IMR-90 (cell line): ENCODE measurements at regions of chr10 and their contacts with region 1.

Region 1: GRCh38 chr10:103712570-103713498 is 142.5 kb downstream of the SH3PXD2A start:
- DNase-seq: peak; percentile 75
- ATAC-seq: peak; percentile 77
- H3K4me3 ChIP-seq: no peak overlapping the region
- H3K27ac ChIP-seq: no peak overlapping the region
- H3K4me1 ChIP-seq: peaks cover 17% of the 10 kb centered on the region
- H3K27me3 ChIP-seq: no peaks in the 10 kb centered on the region
- CTCF ChIP-seq: peak; percentile 96
- POLR2A ChIP-seq: 0 out of 2 replicates have a peak, but pooled peaks have one; percentile 26
- RAD21 ChIP-seq: peak; percentile 97

Region 2: GRCh38 chr10:103281753-103282152 is 431.1 kb before region 1 on chr10:
- CTCF ChIA-PET with region 1: no interaction called
- POLR2A ChIA-PET with region 1: no interaction called
- dilution Hi-C with region 1: no loop called
- in situ Hi-C with region 1: no loop called
- intact Hi-C with region 1: no loop called
- DNase-seq: peak; percentile 43
- ATAC-seq: peak; percentile 61
- H3K4me3 ChIP-seq: no peak overlapping the region
- H3K27ac ChIP-seq: no peak overlapping the region
- H3K4me1 ChIP-seq: peaks cover 9% of the 10 kb centered on the region; the same call in 1 of the 2 replicates
- H3K27me3 ChIP-seq: peaks cover 16% of the 10 kb centered on the region
- CTCF ChIP-seq: no peak
- POLR2A ChIP-seq: no peak
- RAD21 ChIP-seq: no peak

Region 3: GRCh38 chr10:103542764-103543616 is 169.8 kb before region 1 on chr10:
- CTCF ChIA-PET with region 1: no interaction called
- POLR2A ChIA-PET with region 1: no interaction called
- dilution Hi-C with region 1: no loop called
- in situ Hi-C with region 1: no loop called
- intact Hi-C with region 1: no loop called
- DNase-seq: peak; percentile 49
- ATAC-seq: peak; percentile 77
- H3K4me3 ChIP-seq: peak overlapping the region; percentile 39
- H3K27ac ChIP-seq: no peak overlapping the region
- H3K4me1 ChIP-seq: peaks cover 3% of the 10 kb centered on the region; the same call in 1 of the 2 replicates
- H3K27me3 ChIP-seq: peaks cover 82% of the 10 kb centered on the region
- CTCF ChIP-seq: peak; percentile 49
- POLR2A ChIP-seq: no peak
- RAD21 ChIP-seq: peak; percentile 29

Region 4: GRCh38 chr10:103772096-103772845 is 59.4 kb after region 1 on chr10:
- CTCF ChIA-PET with region 1: no interaction called
- POLR2A ChIA-PET with region 1: no interaction called
- dilution Hi-C with region 1: no loop called
- in situ Hi-C with region 1: no loop called
- intact Hi-C with region 1: loop called (anchors 5 kb)
- DNase-seq: peak; percentile 98
- ATAC-seq: peak; percentile 98
- H3K4me3 ChIP-seq: 0 out of 2 replicates have a peak overlapping the region, but pooled peaks have one; percentile 4
- H3K27ac ChIP-seq: peak overlapping the region; percentile 26
- H3K4me1 ChIP-seq: peaks cover 8% of the 10 kb centered on the region; the same call in 1 of the 2 replicates
- H3K27me3 ChIP-seq: no peaks in the 10 kb centered on the region
- CTCF ChIP-seq: no peak
- POLR2A ChIP-seq: peak; percentile 20; the same call in 1 of the 2 replicates
- RAD21 ChIP-seq: peak; percentile 4; the same call in 1 of the 2 replicates

Region 5: GRCh38 chr10:103859161-103860086 is 146.6 kb after region 1 on chr10:
- CTCF ChIA-PET with region 1: interaction called, 4 read pairs
- POLR2A ChIA-PET with region 1: no interaction called
- dilution Hi-C with region 1: loop called (anchors 25 kb)
- in situ Hi-C with region 1: loop called (anchors 5 kb)
- intact Hi-C with region 1: loop called (anchors 1 kb)
- DNase-seq: peak; percentile 74
- ATAC-seq: peak; percentile 76
- H3K4me3 ChIP-seq: no peak overlapping the region
- H3K27ac ChIP-seq: no peak overlapping the region
- H3K4me1 ChIP-seq: peaks cover 6% of the 10 kb centered on the region; the same call in 1 of the 2 replicates
- H3K27me3 ChIP-seq: no peaks in the 10 kb centered on the region
- CTCF ChIP-seq: peak; percentile 75
- POLR2A ChIP-seq: no peak
- RAD21 ChIP-seq: peak; percentile 77

Region 6: GRCh38 chr10:104002911-104003310 is 290.1 kb after region 1 on chr10:
- CTCF ChIA-PET with region 1: no interaction called
- POLR2A ChIA-PET with region 1: no interaction called
- dilution Hi-C with region 1: no loop called
- in situ Hi-C with region 1: loop called (anchors 25 kb)
- intact Hi-C with region 1: no loop called
- DNase-seq: no peak
- ATAC-seq: no peak
- H3K4me3 ChIP-seq: no peak overlapping the region
- H3K27ac ChIP-seq: no peak overlapping the region
- H3K4me1 ChIP-seq: no peaks in the 10 kb centered on the region
- H3K27me3 ChIP-seq: no peaks in the 10 kb centered on the region
- CTCF ChIP-seq: no peak
- POLR2A ChIP-seq: no peak
- RAD21 ChIP-seq: no peak

Region 7: GRCh38 chr10:104209575-104210198 is 496.9 kb after region 1 on chr10:
- CTCF ChIA-PET with region 1: no interaction called
- POLR2A ChIA-PET with region 1: no interaction called
- dilution Hi-C with region 1: no loop called
- in situ Hi-C with region 1: loop called (anchors 25 kb)
- intact Hi-C with region 1: loop called (anchors 2 kb)
- DNase-seq: peak; percentile 39
- ATAC-seq: peak; percentile 79
- H3K4me3 ChIP-seq: no peak overlapping the region
- H3K27ac ChIP-seq: no peak overlapping the region
- H3K4me1 ChIP-seq: no peaks in the 10 kb centered on the region
- H3K27me3 ChIP-seq: peaks cover 29% of the 10 kb centered on the region
- CTCF ChIP-seq: peak; percentile 64
- POLR2A ChIP-seq: no peak
- RAD21 ChIP-seq: peak; percentile 68

Region 8: DNA sequence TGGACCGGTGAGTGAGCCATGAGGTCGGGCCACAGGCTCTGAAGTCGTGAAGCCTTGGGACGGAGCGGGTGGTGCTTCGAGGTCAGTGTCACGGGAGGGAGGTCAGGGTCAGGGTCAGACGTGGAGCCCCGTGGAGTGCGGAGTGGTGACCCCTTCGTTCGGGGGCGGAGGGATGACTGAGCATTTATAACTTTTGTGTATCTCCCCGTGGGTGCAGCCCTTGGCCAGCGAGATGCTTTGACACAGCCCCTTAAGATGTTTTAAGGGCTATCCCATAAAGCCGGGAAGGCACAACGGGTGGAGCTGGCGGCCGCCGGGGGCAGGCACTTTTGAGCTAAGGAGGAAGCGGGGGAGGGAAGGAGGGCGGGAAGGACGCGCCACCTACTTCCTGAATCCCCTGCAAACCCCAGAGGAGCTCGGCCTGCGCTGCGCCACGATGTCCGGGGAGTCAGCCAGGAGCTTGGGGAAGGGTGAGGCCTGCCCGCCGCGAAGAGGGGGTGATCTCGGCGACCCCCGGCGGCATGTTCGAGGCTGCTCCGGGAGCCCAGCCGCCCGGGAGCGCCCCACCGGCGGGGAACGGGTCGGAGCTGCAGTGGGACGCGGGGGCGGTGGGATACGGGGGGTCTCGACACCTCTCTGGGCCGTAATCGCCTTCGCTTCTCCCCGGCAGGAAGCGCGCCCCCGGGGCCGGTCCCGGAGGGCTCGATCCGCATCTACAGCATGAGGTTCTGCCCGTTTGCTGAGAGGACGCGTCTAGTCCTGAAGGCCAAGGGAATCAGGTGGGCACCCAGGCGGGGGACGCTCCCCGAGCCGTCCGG is 541.9 kb after region 1 on chr10 and contains the start of gene GSTO1:
- CTCF ChIA-PET with region 1: no interaction called
- POLR2A ChIA-PET with region 1: no interaction called
- dilution Hi-C with region 1: no loop called
- in situ Hi-C with region 1: no loop called
- intact Hi-C with region 1: loop called (anchors 2 kb)
- DNase-seq: peak; percentile 76
- ATAC-seq: peak; percentile 89
- H3K4me3 ChIP-seq: peak within 1 kb of the TSS; percentile 96
- H3K27ac ChIP-seq: peak within 1 kb of the TSS; percentile 96
- H3K4me1 ChIP-seq: peaks cover 8% of the 10 kb centered on the region
- H3K27me3 ChIP-seq: no peaks in the 10 kb centered on the region
- CTCF ChIP-seq: no peak
- POLR2A ChIP-seq: peak; percentile 76
- RAD21 ChIP-seq: no peak
- total RNA-seq, gene GSTO1: 258 and 330 TPM in 2 replicates